Common myeloid progenitor, CD34-positive (primary cell): ENCODE measurements at regions of chr11 and their contacts with region 1.

Region 1: GRCh38 chr11:59053387-59053786 is 32.7 kb upstream of the GLYATL1B start:
- DNase-seq: peak; percentile 70 to 87 (median 82)
- H3K4me3 ChIP-seq: no peak overlapping the region
- H3K27ac ChIP-seq: no peak overlapping the region
- H3K4me1 ChIP-seq: peaks cover 0 to 6% (median 2%) of the 10 kb centered on the region in 4 experiments
- H3K27me3 ChIP-seq: no peaks in the 10 kb centered on the region

Region 2: GRCh38 chr11:58958500-58958899 is 94.9 kb before region 1 on chr11:
- CTCF ChIA-PET with region 1: interaction called, 45 read pairs
- POLR2A ChIA-PET with region 1: no interaction called
- DNase-seq: peak; percentile 77 to 86 (median 80)
- H3K4me3 ChIP-seq: no peak overlapping the region
- H3K27ac ChIP-seq: no peak overlapping the region
- H3K4me1 ChIP-seq: no peaks in the 10 kb centered on the region
- H3K27me3 ChIP-seq: no peaks in the 10 kb centered on the region

Region 3: DNA sequence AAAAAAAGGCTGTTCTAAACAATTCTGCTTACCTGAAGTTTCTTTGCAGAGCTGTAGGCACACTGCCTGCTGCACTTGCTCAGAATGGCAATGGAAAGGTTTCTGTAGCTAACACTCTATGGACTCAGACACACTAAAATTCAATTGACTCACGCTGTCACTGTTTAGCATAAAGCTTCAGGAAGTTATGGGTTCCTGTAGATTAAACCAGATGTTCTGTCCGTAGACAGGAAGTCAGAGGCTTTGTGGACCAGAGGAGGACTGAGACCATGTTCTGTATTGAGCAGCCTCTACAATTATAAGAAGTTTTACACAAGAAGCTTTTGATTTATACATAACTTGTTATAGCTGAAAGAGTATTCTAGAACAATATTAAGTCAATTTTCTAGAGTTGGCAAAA is 43.7 kb before region 1 on chr11:
- CTCF ChIA-PET with region 1: interaction called, 15 read pairs
- POLR2A ChIA-PET with region 1: no interaction called
- DNase-seq: peak; percentile 71 to 95 (median 87)
- H3K4me3 ChIP-seq: peak overlapping the region in 5 of 7 experiments; percentile 1 to 56 (median 30)
- H3K27ac ChIP-seq: peak overlapping the region; percentile 9 to 72
- H3K4me1 ChIP-seq: peaks cover 29 to 59% (median 45%) of the 10 kb centered on the region in 4 experiments
- H3K27me3 ChIP-seq: no peaks in the 10 kb centered on the region

Region 4: DNA sequence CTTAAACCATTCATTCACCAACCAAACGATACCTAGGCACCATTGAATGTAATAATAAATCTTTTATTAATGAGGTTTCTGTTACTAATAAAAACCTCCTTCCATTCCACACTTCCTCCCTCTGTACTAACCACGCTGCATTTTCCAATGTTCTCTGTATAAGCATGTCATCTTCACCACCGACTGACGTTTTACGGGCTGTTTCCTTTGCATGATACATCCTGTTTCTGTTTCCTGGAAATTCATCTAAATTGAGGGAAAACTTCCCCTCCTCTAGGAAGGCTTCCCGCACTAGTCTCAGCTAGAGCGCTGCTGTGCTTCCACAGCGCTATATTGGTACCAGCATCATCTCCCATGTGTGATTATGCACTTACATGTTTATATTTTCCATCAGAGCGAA is 421.8 kb after region 1 on chr11:
- CTCF ChIA-PET with region 1: no interaction called
- POLR2A ChIA-PET with region 1: no interaction called
- DNase-seq: no peak
- H3K4me3 ChIP-seq: no peak overlapping the region
- H3K27ac ChIP-seq: no peak overlapping the region
- H3K4me1 ChIP-seq: no peaks in the 10 kb centered on the region
- H3K27me3 ChIP-seq: no peaks in the 10 kb centered on the region